Stomach (tissue), 19 donors: ENCODE measurements at regions of chr11 and their contacts with region 1.

Region 1: DNA sequence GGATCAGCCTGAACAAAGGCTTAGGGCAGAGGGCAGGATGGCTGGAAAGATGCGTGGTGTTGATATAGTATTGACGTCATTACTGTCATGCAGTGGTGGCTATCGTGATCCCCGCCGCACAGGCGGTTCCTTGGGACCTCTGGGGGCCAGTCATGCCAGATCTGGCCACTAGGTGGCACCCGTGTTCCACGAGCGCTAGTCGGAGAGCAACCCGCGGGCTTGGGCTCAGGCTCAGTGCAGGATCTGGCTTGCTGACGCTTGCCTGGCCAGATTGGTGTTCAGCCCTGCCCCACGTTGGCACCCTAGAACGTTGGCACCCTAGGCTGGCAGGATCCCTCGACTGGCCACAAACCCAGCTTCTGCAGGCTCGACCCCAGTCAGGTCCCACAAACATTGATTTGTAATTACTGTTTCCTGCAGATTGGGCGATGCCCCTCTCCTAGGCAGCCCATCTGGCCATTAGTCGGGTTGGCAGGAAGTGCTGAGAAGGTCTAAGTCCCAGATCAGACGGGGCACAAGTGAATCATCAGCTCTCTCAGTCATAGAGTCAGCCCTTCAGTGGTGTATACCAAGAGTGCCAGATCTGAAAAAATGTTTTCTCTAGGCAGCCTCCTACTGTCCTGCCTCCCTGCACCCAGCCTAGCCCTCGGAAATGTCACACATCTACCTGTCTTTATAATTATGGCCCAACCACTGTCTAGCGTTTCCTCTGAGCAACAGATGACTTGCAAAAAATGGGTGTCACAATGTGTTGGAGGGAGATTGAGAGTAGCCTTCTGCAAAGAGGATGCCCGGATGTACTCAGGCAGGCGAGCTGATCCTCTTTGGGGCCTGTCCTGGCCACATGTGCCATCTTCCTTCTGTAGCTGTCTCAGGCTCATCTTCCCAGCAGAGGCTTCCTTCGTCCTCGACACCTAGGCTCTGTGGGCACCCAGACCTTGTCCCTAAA is 315.3 kb downstream of the TMEM135 start:
- DNase-seq: peak; percentile 87 to 91
- H3K4me3 ChIP-seq: no peak overlapping the region
- H3K27ac ChIP-seq: no peak overlapping the region
- H3K4me1 ChIP-seq: peaks cover 0 to 11% (median 7%) of the 10 kb centered on the region in 4 donors
- H3K27me3 ChIP-seq: peaks cover 0 to 3% (median 0%) of the 10 kb centered on the region in 3 donors
- CTCF ChIP-seq: peak in 6 of 7 experiments; percentile 57 to 100 (median 99)
- EP300 ChIP-seq: no peak
- POLR2A ChIP-seq: no peak

Region 2: DNA sequence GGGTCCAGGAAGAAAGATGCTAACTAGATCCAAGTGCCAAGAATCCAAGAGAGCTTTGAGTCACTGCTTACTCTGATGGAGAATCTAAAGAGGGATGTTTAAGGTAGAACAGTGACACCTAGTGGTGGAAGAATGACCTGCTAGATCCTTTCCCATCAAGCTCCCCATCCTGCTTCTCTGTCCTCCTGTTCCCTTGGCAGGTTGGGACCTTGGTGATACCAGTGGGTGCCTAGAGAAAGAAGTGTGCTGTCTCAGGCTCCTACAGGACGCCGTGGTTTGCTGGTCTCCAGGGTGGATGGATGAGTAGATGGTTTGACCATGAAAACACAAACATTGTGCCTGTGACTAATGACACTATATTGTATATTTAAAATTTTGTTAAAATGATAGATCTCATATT is 68.4 kb after region 1 on chr11:
- intact Hi-C with region 1: loop called (anchors 2 kb)
- DNase-seq: peak in 1 of 2 donors; percentile 87
- H3K4me3 ChIP-seq: no peak overlapping the region
- H3K27ac ChIP-seq: no peak overlapping the region
- H3K4me1 ChIP-seq: no peaks in the 10 kb centered on the region
- H3K27me3 ChIP-seq: no peaks in the 10 kb centered on the region
- CTCF ChIP-seq: peak in 5 of 7 experiments; percentile 57 to 84 (median 70)
- EP300 ChIP-seq: no peak
- POLR2A ChIP-seq: no peak

Region 3: DNA sequence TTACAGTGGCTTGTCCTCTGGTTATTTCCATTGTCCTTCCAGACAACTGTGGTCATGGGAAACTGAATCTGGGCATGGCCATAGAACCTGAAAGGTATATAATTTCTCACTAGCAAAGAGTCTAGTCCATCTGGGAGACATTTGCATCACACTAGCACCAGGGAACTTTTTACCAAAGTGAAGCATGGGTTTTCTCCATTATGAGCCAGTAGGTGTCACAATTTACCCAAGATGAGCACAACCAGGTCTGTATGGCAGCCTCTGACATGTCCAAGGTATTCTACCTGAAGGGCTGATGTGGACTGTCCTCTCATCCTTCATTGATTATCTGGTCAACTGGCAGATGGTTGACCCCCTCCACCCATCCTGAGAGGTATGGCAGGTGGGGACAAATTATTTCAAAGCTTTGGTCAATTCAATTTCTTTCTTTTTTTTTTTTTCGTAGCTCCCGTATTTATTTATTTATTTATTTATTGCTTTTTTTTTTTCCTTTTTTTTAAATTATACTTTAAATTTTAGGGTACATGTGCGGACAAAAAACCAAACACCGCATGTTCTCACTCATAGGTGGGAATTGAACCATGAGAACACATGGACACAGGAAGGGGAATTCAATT is 110.6 kb after region 1 on chr11:
- intact Hi-C with region 1: no loop called
- DNase-seq: peak in 1 of 2 donors; percentile 47
- H3K4me3 ChIP-seq: no peak overlapping the region
- H3K27ac ChIP-seq: no peak overlapping the region
- H3K4me1 ChIP-seq: no peaks in the 10 kb centered on the region
- H3K27me3 ChIP-seq: no peaks in the 10 kb centered on the region
- CTCF ChIP-seq: no peak
- EP300 ChIP-seq: no peak
- POLR2A ChIP-seq: no peak